ENCODE measurements at regions of chr3 and their contacts with region 1.

Region 1: GRCh38 chr3:25907081-25907480 is 117.2 kb downstream of the OXSM start:
- DNase-seq: no peak
- H3K4me3 ChIP-seq: no peak overlapping the region
- H3K27ac ChIP-seq: no peak overlapping the region
- H3K4me1 ChIP-seq: no peaks in the 10 kb centered on the region
- H3K27me3 ChIP-seq: no peaks in the 10 kb centered on the region
- CTCF ChIP-seq: no peak
- POLR2A ChIP-seq: no peak

Region 2: GRCh38 chr3:25229586-25229985 is 677.5 kb before region 1 on chr3:
- intact Hi-C with region 1: loop called (anchors 5 kb)
- DNase-seq: no peak
- H3K4me3 ChIP-seq: no peak overlapping the region
- H3K27ac ChIP-seq: no peak overlapping the region
- H3K4me1 ChIP-seq: no peaks in the 10 kb centered on the region
- H3K27me3 ChIP-seq: no peaks in the 10 kb centered on the region
- CTCF ChIP-seq: no peak
- POLR2A ChIP-seq: no peak

Region 3: GRCh38 chr3:25427942-25428788 is 478.9 kb before region 1 on chr3 and contains the start of gene RARB:
- intact Hi-C with region 1: no loop called
- DNase-seq: peak; percentile 64 to 84
- H3K4me3 ChIP-seq: peak within 1 kb of the TSS; percentile 48 to 76 (median 61)
- H3K27ac ChIP-seq: peak within 1 kb of the TSS; percentile 89 to 94
- H3K4me1 ChIP-seq: no peaks in the 10 kb centered on the region
- H3K27me3 ChIP-seq: no peaks in the 10 kb centered on the region
- CTCF ChIP-seq: no peak
- POLR2A ChIP-seq: peak; percentile 85
- total RNA-seq, gene RARB: 0.80 to 20.1 (median 8.2) TPM

Region 4: DNA sequence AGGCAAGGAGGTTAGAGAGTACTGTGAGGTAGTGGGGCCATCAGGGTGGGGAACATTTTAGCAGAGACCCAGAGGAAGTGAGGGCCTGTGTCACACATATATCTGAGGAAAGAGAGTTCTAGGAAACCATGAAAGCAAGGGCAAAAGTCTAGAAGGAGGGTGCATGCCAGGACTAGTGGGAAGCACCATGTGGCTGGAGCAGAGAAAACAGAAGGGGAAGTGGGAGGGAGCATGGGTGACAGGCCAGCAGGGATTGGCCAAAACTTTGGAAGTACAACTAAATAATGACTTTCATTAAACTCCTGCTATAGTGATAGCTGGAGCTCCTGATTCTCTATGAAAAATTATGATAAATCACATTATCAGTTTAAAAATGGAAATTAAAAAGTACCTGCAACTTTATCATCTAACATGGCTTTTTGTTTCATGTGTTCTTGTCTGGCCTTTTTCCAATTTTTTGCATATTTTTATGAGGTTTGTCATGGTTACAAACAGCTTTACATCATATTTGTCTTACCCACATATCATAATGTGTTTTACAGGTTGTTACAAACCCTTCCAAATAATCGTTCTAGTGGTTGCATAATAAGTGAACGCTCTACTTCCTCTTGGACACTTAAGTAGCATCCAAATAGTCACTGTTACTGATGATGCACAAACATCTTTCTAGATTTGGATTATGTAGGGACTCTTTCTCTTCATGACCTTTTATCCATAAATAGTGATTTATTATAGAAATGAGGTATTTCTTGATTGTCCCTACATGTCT is 1293.8 kb after region 1 on chr3:
- intact Hi-C with region 1: no loop called
- DNase-seq: no peak
- H3K4me3 ChIP-seq: no peak overlapping the region
- H3K27ac ChIP-seq: no peak overlapping the region
- H3K4me1 ChIP-seq: no peaks in the 10 kb centered on the region
- H3K27me3 ChIP-seq: no peaks in the 10 kb centered on the region
- CTCF ChIP-seq: no peak
- POLR2A ChIP-seq: no peak